ENCODE measurements at regions of chrX and their contacts with region 1.

Region 1: GRCh38 chrX:24838629-24839028 is 144.9 kb downstream of the POLA1 start:
- DNase-seq: peak; percentile 12
- ATAC-seq: no peak
- H3K4me3 Mint-ChIP-seq: no peak overlapping the region
- H3K27ac Mint-ChIP-seq: no peak overlapping the region
- H3K4me1 Mint-ChIP-seq: no peaks in the 10 kb centered on the region
- H3K27me3 Mint-ChIP-seq: no peaks in the 10 kb centered on the region
- CTCF ChIP-seq: peak; percentile 48

Region 2: DNA sequence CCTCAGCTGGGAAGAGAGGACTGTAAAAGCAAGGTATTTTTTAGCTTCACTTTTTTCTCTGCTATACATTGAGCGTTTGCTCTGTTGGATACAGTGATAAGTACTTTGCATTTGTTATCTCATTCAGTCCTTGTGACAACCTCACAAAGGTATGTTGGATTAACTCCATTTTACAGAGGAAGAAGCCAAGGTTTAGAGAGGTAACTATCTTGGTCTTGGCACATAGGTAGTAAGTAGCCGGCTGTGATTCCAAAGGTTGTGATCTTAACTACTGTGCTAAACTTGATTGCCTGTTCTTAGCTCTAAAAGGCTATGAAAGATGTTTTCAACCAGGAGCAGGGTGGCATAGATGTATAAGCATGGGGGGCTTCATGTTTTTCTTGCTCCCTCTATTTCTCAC is 10.5 kb before region 1 on chrX:
- CTCF ChIA-PET with region 1: interaction called, 18 read pairs
- POLR2A ChIA-PET with region 1: no interaction called
- intact Hi-C with region 1: no loop called
- DNase-seq: no peak
- ATAC-seq: no peak
- H3K4me3 Mint-ChIP-seq: no peak overlapping the region
- H3K27ac Mint-ChIP-seq: no peak overlapping the region
- H3K4me1 Mint-ChIP-seq: no peaks in the 10 kb centered on the region
- H3K27me3 Mint-ChIP-seq: no peaks in the 10 kb centered on the region
- CTCF ChIP-seq: no peak

Region 3: GRCh38 chrX:24969812-24970211 is 131.2 kb after region 1 on chrX:
- CTCF ChIA-PET with region 1: no interaction called
- POLR2A ChIA-PET with region 1: no interaction called
- intact Hi-C with region 1: no loop called
- DNase-seq: no peak
- ATAC-seq: no peak
- H3K4me3 Mint-ChIP-seq: no peak overlapping the region
- H3K27ac Mint-ChIP-seq: no peak overlapping the region
- H3K4me1 Mint-ChIP-seq: no peaks in the 10 kb centered on the region
- H3K27me3 Mint-ChIP-seq: no peaks in the 10 kb centered on the region
- CTCF ChIP-seq: no peak

Region 4: GRCh38 chrX:25012793-25013631 is 174.4 kb after region 1 on chrX:
- CTCF ChIA-PET with region 1: no interaction called
- POLR2A ChIA-PET with region 1: no interaction called
- intact Hi-C with region 1: no loop called
- DNase-seq: no peak
- ATAC-seq: no peak
- H3K4me3 Mint-ChIP-seq: peak overlapping the region; percentile 60
- H3K27ac Mint-ChIP-seq: no peak overlapping the region
- H3K4me1 Mint-ChIP-seq: peaks cover 7% of the 10 kb centered on the region
- H3K27me3 Mint-ChIP-seq: peaks cover 66% of the 10 kb centered on the region
- CTCF ChIP-seq: no peak